GM13976 (cell line): ENCODE measurements at regions of chr16 and their contacts with region 1.

Region 1: GRCh38 chr16:28549390-28549789 is 4.3 kb upstream of the SGF29 start:
- DNase-seq: peak; percentile 57
- CTCF ChIP-seq: peak; percentile 47

Region 2: GRCh38 chr16:28291873-28292660 is 257.3 kb before region 1 on chr16 and contains the start of gene SBK1:
- in situ Hi-C with region 1: loop called (anchors 25 kb)
- DNase-seq: peak; percentile 98
- CTCF ChIP-seq: no peak

Region 3: GRCh38 chr16:28309811-28310311 is 239.5 kb before region 1 on chr16:
- in situ Hi-C with region 1: no loop called
- DNase-seq: no peak
- CTCF ChIP-seq: no peak